ENCODE measurements at regions of chr5 and their contacts with region 1.

Region 1: GRCh38 chr5:169701910-169702451 is 64.9 kb downstream of the DOCK2 start:
- DNase-seq: peak; percentile 66
- H3K4me3 ChIP-seq: no peak overlapping the region
- H3K27ac ChIP-seq: no peak overlapping the region
- H3K4me1 ChIP-seq: peaks cover 25% of the 10 kb centered on the region
- H3K27me3 ChIP-seq: no peaks in the 10 kb centered on the region
- CTCF ChIP-seq: peak; percentile 63

Region 2: DNA sequence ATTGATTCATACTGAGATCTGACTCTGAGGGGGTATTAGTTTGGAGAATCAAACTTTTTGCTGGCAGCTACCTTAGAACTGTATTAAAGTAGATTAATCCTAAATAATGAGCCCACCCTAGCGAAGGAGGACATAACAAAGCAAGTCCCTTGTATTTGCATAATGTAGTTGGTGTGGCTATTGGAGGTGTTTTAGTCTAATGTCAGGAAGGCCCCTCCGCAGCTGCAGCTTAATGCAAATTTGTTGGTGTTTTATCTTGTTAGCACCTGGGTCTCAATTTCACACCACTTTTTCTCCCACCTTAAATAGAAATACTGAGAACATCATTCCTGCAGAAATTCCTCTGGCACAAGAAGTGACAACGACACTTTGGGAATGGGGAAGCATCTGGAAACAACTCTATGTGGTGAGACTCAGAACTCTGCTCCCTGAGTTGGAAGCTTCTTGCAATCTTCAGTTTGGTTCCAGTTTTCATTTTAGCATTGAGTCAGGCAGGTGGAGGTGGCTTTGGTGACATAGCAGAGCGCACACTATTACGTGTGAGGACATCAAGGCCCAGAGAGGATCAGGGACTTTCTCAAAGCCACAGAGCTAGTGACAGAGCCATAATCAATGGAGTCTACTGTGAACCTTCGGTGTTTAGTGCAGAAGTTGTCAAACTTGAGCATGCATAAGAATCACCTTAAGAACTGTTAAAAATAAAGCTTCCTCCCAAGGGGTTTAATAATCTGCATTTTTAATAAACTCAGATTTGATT is 31.0 kb before region 1 on chr5:
- CTCF ChIA-PET with region 1: no interaction called
- POLR2A ChIA-PET with region 1: no interaction called
- intact Hi-C with region 1: no loop called
- DNase-seq: no peak
- H3K4me3 ChIP-seq: no peak overlapping the region
- H3K27ac ChIP-seq: no peak overlapping the region
- H3K4me1 ChIP-seq: no peaks in the 10 kb centered on the region
- H3K27me3 ChIP-seq: no peaks in the 10 kb centered on the region
- CTCF ChIP-seq: no peak

Region 3: DNA sequence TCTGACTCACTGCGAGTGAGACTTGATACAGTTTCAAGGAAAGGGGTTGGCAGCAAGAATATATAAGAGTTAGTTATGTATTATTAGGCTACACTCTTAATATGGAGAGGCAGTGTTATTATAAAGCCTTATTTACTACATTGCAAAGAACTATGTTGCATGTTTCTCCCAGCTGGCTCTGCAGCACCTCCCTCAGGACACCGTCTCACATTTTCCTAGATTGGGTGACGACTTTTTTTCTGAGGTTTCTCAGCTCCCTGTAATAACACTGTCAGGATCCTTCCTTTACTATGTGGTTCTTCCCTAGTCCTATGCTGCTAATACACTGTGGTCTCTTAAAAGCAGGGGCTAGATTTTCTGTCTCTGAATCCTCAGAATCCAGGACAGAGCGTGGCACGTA is 124.6 kb after region 1 on chr5:
- CTCF ChIA-PET with region 1: no interaction called
- POLR2A ChIA-PET with region 1: no interaction called
- intact Hi-C with region 1: no loop called
- DNase-seq: no peak
- H3K4me3 ChIP-seq: no peak overlapping the region
- H3K27ac ChIP-seq: no peak overlapping the region
- H3K4me1 ChIP-seq: no peaks in the 10 kb centered on the region
- H3K27me3 ChIP-seq: no peaks in the 10 kb centered on the region
- CTCF ChIP-seq: peak; percentile 40

Region 4: DNA sequence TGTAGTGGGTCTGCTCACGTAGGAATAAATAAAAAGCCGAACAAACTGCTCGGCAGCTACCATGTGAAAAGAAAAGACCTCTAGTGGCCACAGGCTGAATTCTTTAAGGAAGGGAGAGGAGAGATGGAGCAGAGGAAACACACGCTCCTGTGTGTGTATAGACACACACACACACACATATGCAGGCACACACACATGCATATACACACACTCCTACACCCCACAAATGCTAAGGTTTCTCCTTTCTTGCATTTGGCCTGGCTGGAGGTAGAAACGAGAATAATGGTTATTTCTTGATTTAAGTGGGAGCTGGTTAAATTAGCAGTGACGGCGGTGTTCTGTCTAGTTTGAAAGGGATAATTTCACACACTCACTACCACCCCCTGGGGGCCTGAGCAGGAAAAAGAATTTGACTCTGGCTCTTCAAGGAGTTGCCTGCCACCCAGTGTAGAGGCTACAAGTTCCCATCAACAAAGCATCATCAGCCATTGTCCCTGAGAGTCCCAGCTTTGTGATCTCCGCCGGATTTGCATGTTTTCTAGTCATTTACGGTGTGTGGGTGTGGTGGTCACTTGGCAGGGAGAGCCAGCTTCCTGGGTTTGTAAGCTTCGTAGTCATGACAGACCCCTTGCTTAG is 278.6 kb after region 1 on chr5 and contains the start of gene INSYN2B:
- CTCF ChIA-PET with region 1: interaction called, 18 read pairs
- POLR2A ChIA-PET with region 1: no interaction called
- intact Hi-C with region 1: loop called (anchors 1 kb)
- DNase-seq: peak; percentile 91
- H3K4me3 ChIP-seq: peak within 1 kb of the TSS; percentile 57
- H3K27ac ChIP-seq: peak within 1 kb of the TSS; percentile 66
- H3K4me1 ChIP-seq: peaks cover 15% of the 10 kb centered on the region
- H3K27me3 ChIP-seq: no peaks in the 10 kb centered on the region
- CTCF ChIP-seq: peak; percentile 78
- total RNA-seq, gene INSYN2B: 5.6 and 10.8 TPM in 2 replicates

Region 5: DNA sequence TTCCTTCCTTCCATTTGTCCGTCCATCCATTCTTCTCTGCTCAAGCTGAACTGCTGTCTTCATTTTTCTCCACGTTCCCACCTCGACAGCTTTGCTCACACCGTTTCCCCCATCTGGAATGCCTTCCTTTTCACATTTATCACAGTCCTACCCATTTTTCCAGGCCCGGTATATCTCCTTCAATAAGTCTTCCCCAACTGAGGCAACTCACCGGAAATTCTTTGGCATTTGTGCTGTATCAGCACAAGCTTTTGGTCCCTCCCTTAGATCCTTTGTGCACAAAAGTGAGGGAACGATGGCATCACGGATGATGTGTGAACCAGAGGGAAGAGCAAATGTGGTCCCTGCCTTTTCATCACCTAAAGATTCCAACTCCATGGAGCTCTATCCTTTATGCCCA is 323.9 kb after region 1 on chr5:
- CTCF ChIA-PET with region 1: no interaction called
- POLR2A ChIA-PET with region 1: no interaction called
- intact Hi-C with region 1: loop called (anchors 1 kb)
- DNase-seq: peak; percentile 93
- H3K4me3 ChIP-seq: no peak overlapping the region
- H3K27ac ChIP-seq: peak overlapping the region; percentile 90
- H3K4me1 ChIP-seq: peaks cover 21% of the 10 kb centered on the region
- H3K27me3 ChIP-seq: no peaks in the 10 kb centered on the region
- CTCF ChIP-seq: no peak

Region 6: DNA sequence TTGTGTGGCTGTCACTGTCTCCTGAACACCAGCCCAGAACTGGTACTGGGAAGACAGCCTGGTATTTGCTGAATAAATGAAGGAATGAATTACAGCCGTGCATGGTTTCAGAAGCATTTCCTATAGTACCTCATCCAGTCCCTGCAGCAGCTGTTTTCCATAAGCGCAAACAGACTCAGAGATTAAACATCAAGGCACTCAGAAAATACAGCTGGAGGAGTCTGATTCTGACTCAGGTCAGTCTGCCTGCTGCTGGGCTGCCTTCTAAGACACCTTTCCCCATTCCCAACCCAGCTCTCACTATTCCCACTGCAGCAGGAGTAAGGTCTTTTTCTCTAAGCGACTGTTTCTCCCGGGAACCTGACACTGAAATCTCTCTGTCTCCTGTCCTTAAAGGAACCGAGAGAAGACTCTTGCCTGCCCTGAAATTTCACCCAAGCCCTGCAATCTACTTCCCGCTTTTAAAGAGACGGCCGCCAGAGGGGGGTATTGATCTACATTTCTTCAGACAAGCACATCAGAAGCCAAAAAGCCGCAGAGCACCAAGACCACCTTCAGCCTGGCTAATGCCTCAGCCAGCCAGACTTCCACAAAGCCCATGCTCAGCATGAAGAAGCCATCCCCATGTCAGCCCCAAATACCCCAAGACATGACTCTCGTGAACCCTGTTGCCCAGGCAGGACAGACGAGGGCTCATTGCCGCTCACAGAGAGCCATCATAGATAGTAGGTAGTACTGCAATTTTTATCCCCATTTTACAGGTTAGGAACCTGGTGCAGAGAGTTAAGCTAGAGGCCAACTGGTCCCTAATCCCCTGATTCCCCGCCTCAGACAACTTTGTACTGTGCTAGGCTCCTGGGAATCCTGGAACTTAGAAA is 398.3 kb after region 1 on chr5:
- CTCF ChIA-PET with region 1: interaction called, 5 read pairs
- POLR2A ChIA-PET with region 1: no interaction called
- intact Hi-C with region 1: loop called (anchors 5 kb)
- DNase-seq: peak; percentile 86
- H3K4me3 ChIP-seq: no peak overlapping the region
- H3K27ac ChIP-seq: no peak overlapping the region
- H3K4me1 ChIP-seq: no peaks in the 10 kb centered on the region
- H3K27me3 ChIP-seq: no peaks in the 10 kb centered on the region
- CTCF ChIP-seq: peak; percentile 71

Measured in A673 (cell line).